ENCODE measurements at regions of chr1 and their contacts with region 1.

Region 1: DNA sequence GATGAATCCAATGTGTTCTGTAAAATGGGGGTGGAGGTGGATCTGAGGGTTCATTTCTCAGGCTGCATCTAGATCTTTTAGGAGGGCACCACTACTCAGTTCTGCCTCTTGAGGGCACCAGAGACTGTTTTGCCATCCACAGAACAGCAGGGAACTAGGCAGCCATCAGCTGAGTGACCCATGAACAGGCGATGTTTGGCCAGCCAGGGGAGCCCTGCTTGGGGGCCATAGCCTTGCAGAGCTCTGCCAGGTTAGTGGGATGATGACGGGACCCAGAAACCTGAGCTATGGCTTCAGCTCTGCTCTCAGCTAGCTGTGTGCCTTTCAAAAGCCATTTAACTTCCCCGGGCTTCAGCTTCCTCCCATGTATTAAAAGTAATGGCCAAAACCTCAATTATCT is 13.4 kb upstream of the NOS1AP start:
- DNase-seq: no peak
- H3K4me3 ChIP-seq: no peak overlapping the region
- H3K27ac ChIP-seq: no peak overlapping the region
- H3K4me1 ChIP-seq: no peaks in the 10 kb centered on the region
- H3K27me3 ChIP-seq: no peaks in the 10 kb centered on the region
- CTCF ChIP-seq: peak; percentile 82 to 92 (median 85)
- EP300 ChIP-seq: no peak
- POLR2A ChIP-seq: no peak

Region 2: DNA sequence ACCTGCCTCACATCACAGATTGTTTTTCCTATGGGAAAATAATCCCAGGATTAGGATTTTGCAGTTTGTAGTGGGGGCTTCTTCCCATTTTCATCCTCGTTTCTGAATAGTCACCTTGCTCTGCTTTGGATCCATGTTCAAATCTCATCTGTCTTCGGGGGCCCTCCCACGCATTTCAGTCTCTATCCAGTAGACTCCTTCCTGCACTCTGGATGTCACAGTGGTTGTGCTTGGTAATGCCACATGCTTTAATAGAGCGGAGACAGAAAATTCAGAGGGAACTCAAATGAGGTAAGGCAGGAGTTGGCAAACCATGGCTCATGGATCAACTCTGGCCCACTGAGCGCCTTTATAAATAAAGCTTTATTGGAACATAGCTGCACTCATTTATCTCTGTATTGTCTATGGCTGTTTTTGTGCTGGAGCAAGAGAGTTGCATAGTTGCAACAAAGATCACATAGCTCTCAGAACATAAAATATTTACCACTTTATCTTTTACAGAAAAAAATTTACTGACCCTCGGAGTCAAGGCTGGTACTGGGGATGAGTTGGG is 219.7 kb after region 1 on chr1:
- intact Hi-C with region 1: loop called (anchors 2 kb)
- DNase-seq: no peak
- H3K4me3 ChIP-seq: no peak overlapping the region
- H3K27ac ChIP-seq: no peak overlapping the region
- H3K4me1 ChIP-seq: peaks cover 0 to 5% (median 0%) of the 10 kb centered on the region in 4 donors
- H3K27me3 ChIP-seq: no peaks in the 10 kb centered on the region
- CTCF ChIP-seq: no peak
- EP300 ChIP-seq: no peak
- POLR2A ChIP-seq: no peak

Region 3: GRCh38 chr1:162391790-162392563 is 335.9 kb after region 1 on chr1:
- intact Hi-C with region 1: loop called (anchors 2 kb)
- DNase-seq: no peak
- H3K4me3 ChIP-seq: no peak overlapping the region
- H3K27ac ChIP-seq: no peak overlapping the region
- H3K4me1 ChIP-seq: peaks cover 0 to 6% (median 2%) of the 10 kb centered on the region in 4 donors
- H3K27me3 ChIP-seq: peaks cover 0 to 34% (median 0%) of the 10 kb centered on the region in 4 donors
- CTCF ChIP-seq: peak; percentile 71 to 79 (median 75)
- EP300 ChIP-seq: no peak
- POLR2A ChIP-seq: no peak

Measured in esophagus muscularis mucosa (tissue), 4 donors.